MCF 10A (cell line): ENCODE measurements at regions of chr15 and their contacts with region 1.

Region 1: GRCh38 chr15:48358229-48358641 is 27.0 kb downstream of the DUT start:
- DNase-seq: peak; percentile 34
- H3K4me3 Mint-ChIP-seq: no peak overlapping the region
- H3K27ac Mint-ChIP-seq: no peak overlapping the region
- H3K4me1 Mint-ChIP-seq: peaks cover 19% of the 10 kb centered on the region
- H3K27me3 Mint-ChIP-seq: no peaks in the 10 kb centered on the region
- CTCF ChIP-seq: peak; percentile 75

Region 2: DNA sequence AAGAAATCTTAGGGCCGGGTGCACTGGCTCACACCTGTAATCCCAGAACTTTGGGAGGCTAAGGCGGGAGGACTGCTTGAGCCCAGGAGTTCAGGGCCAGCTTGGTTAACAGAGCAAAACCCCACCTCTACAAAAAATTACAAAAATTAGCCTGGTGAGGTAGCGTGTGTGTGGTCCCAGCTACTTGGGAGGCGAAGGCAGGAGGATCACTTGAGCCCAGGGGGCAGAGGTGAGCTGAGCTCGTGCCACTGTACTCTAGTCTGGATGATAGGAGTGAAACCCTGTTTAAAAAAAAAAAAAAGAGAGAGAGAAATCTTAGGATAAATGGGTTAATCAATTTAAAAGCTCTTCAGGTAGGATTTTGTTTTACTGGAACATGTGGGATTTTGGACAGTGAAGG is 58.2 kb before region 1 on chr15:
- CTCF ChIA-PET with region 1: no interaction called
- POLR2A ChIA-PET with region 1: no interaction called
- intact Hi-C with region 1: no loop called
- DNase-seq: no peak
- H3K4me3 Mint-ChIP-seq: no peak overlapping the region
- H3K27ac Mint-ChIP-seq: no peak overlapping the region
- H3K4me1 Mint-ChIP-seq: no peaks in the 10 kb centered on the region
- H3K27me3 Mint-ChIP-seq: no peaks in the 10 kb centered on the region
- CTCF ChIP-seq: no peak

Region 3: GRCh38 chr15:48373821-48374451 is 15.7 kb after region 1 on chr15:
- CTCF ChIA-PET with region 1: interaction called, 26 read pairs
- POLR2A ChIA-PET with region 1: interaction called, 3 read pairs
- intact Hi-C with region 1: no loop called
- DNase-seq: peak; percentile 91
- H3K4me3 Mint-ChIP-seq: peak overlapping the region; percentile 6
- H3K27ac Mint-ChIP-seq: peak overlapping the region; percentile 47
- H3K4me1 Mint-ChIP-seq: peaks cover 12% of the 10 kb centered on the region
- H3K27me3 Mint-ChIP-seq: no peaks in the 10 kb centered on the region
- CTCF ChIP-seq: no peak

Region 4: DNA sequence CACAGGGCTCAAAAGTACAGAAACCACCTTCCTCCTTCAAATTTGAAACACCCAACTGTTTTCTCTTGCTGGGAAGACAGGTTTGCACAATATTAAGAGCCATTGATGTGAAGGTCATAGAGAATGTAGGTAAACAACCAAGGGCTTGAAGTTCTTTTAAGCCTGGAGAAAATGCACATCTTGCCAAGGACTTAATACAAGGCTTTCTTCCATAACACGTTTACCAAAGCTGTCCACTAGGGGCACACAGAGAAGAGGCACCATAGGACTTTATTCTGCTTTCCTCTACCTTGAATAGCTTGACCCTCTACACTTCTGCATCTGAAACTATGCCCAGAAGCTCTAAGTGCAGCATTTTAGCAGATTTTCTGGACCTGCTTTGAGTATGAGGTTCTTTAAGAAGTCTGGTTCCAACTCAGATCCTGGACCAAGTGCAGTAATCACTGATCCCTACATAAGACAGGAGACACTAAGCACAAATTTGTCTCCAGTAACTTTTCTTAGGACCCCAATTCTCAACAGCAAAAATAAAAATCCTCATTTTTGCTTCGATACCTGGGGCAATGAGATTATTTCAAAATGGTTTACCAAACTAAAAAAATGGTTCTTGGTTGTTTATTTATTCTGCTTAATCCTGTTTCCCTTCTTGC is 149.3 kb after region 1 on chr15:
- CTCF ChIA-PET with region 1: interaction called, 5 read pairs
- POLR2A ChIA-PET with region 1: no interaction called
- intact Hi-C with region 1: loop called (anchors 5 kb)
- DNase-seq: peak; percentile 63
- H3K4me3 Mint-ChIP-seq: no peak overlapping the region
- H3K27ac Mint-ChIP-seq: peak overlapping the region; percentile 66
- H3K4me1 Mint-ChIP-seq: no peaks in the 10 kb centered on the region
- H3K27me3 Mint-ChIP-seq: no peaks in the 10 kb centered on the region
- CTCF ChIP-seq: peak; percentile 33

Region 5: GRCh38 chr15:48800811-48801455 is 442.7 kb after region 1 on chr15:
- CTCF ChIA-PET with region 1: interaction called, 57 read pairs
- POLR2A ChIA-PET with region 1: interaction called, 9 read pairs
- intact Hi-C with region 1: loop called (anchors 1 kb)
- DNase-seq: peak; percentile 26
- H3K4me3 Mint-ChIP-seq: no peak overlapping the region
- H3K27ac Mint-ChIP-seq: peak overlapping the region; percentile 42
- H3K4me1 Mint-ChIP-seq: peaks cover 14% of the 10 kb centered on the region
- H3K27me3 Mint-ChIP-seq: no peaks in the 10 kb centered on the region
- CTCF ChIP-seq: peak; percentile 42

Region 6: DNA sequence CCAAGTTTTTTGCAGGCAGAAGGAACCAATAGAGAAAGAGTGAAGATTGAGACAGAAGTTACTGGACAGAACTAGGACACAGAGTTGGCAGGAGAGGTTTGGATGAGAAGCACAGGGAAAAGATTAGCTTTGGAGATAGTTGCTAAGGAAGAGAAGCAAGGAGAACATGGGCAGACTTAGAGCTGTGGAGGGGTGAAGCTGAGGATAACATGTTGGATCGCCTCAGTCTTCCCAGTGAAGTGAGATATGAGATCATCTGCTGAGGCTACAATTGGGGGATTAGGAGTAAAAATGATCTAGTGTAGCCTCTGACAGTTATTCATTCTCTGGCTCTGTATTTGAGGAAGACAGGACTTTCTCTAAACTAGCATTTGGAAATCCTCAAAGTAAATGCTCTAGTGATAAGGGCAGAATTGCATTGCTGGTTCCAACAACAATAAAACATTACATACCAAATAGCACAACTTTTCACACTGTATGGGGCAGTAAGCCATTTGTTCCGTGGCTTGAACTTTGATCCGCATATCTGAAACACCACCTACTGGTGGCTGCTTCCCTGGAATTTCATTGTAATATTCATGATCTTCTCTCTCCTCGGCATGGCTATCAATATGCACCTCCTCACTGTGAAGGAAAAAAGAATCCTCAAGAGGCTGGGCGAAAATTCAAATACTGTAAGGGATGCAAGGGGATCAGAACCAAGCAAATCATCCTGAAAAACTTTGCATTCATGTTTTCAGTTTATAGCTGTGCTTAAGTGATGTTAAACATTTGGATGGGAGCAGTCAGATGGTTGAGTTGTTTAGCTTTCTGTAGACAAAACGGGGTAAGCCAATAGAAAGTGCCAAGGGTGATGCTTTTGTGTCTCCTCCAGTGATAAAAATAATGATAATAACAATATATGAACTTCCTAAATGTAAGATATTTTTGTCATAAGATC is 497.5 kb after region 1 on chr15:
- CTCF ChIA-PET with region 1: interaction called, 35 read pairs
- POLR2A ChIA-PET with region 1: interaction called, 3 read pairs
- intact Hi-C with region 1: no loop called
- DNase-seq: peak; percentile 55
- H3K4me3 Mint-ChIP-seq: no peak overlapping the region
- H3K27ac Mint-ChIP-seq: peak overlapping the region; percentile 1
- H3K4me1 Mint-ChIP-seq: peaks cover 21% of the 10 kb centered on the region
- H3K27me3 Mint-ChIP-seq: no peaks in the 10 kb centered on the region
- CTCF ChIP-seq: peak; percentile 53